ENCODE measurements at regions of chr22 and their contacts with region 1.

Region 1: DNA sequence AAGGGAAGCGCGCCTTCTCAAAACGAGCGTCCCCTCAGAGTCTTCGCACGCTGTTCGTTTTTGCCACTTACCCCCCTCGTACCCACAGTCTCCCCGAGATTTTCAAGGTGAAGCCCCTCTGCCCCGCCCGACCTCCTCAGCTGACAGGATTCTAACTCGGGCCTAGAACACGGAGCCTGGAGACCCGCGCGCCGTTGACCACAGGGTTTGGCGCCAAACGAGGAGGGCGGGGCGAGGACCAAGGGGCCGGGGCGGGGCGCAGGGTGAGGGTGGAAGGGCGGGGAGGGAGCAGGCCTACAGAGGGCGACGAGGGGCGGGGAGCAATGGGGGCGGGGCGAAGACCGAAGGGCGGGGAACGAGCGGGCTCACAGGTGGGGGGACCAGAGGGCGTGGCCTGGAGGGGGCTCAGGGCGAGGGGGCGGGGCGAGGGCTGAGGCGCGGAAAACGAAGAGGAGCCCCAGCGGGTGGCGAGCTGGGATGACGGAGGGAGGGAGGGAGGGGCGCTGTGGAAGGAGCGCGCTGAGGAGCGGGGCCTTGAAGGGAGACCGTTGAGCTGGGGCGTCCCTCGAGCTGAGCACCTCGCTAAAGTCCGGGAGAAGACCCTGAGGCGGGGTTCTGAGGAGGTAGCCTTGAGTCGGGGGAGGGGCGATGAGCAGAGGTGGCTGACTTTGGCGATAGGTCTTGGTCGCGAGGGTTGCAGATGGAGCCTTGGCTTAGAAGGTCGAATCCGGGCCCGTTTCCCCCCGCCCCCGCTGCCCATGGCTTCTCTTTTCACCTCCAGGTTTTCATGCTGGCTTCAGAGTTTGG is at the start of gene DMC1:
- DNase-seq: peak; percentile 98
- ATAC-seq: peak; percentile 98
- total RNA-seq, gene DMC1: 4.7 TPM

Region 2: GRCh38 chr22:37954686-37955085 is 615.5 kb before region 1 on chr22:
- intact Hi-C with region 1: no loop called
- DNase-seq: no peak
- ATAC-seq: no peak

Region 3: DNA sequence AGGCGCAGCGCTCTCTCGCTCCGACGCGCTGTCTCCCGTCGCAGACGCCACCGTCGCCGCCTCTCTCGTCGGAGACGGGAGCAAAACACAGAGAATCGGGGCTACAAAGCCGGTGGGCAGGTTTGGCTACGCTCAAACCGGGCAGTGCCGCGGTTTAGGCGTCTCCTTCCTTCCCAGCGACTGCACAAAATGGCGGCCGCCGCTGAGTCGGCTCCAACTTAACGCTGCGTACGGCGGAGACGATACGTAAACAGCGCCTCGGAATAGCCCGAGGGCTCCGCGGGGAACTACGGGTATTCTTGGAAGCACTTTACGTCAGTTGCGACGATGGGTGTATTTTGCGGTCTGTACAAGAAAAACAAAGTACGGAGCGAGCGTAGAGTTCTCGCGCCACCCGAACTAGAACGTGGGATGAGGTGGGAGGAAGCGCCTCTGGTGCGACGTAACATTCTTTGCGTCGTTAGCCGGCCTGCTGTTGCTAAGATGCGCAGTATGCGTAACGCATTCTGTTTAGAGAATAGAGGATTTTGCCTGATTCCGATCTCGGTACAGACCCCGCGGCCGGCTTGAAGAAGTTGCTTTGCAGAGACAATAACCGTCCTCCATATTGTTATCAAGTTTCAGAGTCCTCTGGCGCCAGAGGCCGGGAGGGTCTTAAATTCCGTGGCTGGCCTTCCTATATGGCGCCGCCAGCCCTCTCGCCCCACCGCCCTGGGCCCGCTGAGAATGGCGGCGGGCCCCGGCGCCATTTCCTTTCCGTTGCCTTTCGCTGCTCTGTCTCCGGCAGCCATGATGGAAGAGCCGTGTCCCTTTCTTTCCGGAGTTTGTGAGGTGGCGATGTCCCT is 63.8 kb before region 1 on chr22 and contains the start of gene DDX17:
- intact Hi-C with region 1: loop called (anchors 5 kb)
- DNase-seq: peak; percentile 96
- ATAC-seq: peak; percentile 96
- total RNA-seq, gene DDX17: 742 TPM

Region 4: GRCh38 chr22:38793721-38794466 is 223.7 kb after region 1 on chr22 and contains the start of gene DNAL4:
- intact Hi-C with region 1: no loop called
- DNase-seq: peak; percentile 96
- ATAC-seq: peak; percentile 98
- total RNA-seq, gene DNAL4: 11.1 TPM

Measured in sciatic nerve (tissue), 2 donors.